Psoas muscle (tissue), 8 donors: ENCODE measurements at regions of chr18 and their contacts with region 1.

Region 1: GRCh38 chr18:26813043-26813442 is 52.5 kb downstream of the AQP4 start:
- DNase-seq: no peak
- ATAC-seq: peak in 3 of 4 donors; percentile 66 to 88 (median 73)
- H3K4me3 ChIP-seq: no peak overlapping the region
- H3K27ac ChIP-seq: no peak overlapping the region
- H3K4me1 ChIP-seq: no peaks in the 10 kb centered on the region
- H3K27me3 ChIP-seq: no peaks in the 10 kb centered on the region
- CTCF ChIP-seq: peak; percentile 73

Region 2: DNA sequence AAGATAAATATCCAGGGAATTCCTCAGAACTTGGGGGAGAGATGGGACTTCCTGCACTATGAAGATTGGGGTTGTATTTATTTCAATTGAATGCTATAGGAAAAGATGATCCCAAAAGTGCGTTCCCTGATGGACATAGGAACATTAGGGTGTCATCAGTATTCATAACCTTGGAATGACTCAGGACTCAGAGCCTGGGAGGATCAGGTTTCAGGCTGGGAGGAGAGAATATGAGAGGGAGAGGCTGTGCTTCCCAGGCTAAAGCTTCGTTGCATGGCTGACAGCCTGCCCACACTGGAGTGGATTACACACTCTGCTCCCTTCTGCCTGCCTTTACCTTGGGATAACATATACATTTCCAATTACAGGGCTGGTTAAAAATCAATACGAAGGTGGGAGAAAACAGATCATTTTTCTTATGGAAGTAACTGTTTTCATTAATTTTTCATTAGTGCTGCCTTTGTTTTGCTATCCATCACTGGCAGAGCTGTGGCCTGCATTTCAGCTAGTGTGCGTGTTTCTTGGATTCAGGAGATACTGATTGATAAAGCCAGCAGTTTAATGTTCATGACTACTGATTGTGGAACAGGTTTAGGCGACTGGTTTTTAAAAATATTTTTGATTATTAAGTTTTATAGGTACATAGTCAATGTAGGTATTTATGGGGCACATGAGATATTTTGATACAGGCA is 383.4 kb before region 1 on chr18:
- intact Hi-C with region 1: no loop called
- DNase-seq: no peak
- ATAC-seq: peak; percentile 54 to 84 (median 70)
- H3K4me3 ChIP-seq: no peak overlapping the region
- H3K27ac ChIP-seq: no peak overlapping the region
- H3K4me1 ChIP-seq: peaks cover 3% of the 10 kb centered on the region
- H3K27me3 ChIP-seq: no peaks in the 10 kb centered on the region
- CTCF ChIP-seq: no peak

Region 3: GRCh38 chr18:26963292-26963691 is 150.2 kb after region 1 on chr18:
- intact Hi-C with region 1: loop called (anchors 1 to 5 kb)
- DNase-seq: no peak
- ATAC-seq: peak in 3 of 4 donors; percentile 50 to 75 (median 57)
- H3K4me3 ChIP-seq: no peak overlapping the region
- H3K27ac ChIP-seq: no peak overlapping the region
- H3K4me1 ChIP-seq: peaks cover 12% of the 10 kb centered on the region
- H3K27me3 ChIP-seq: no peaks in the 10 kb centered on the region
- CTCF ChIP-seq: peak; percentile 24

Region 4: GRCh38 chr18:27005589-27005988 is 192.5 kb after region 1 on chr18:
- intact Hi-C with region 1: loop called (anchors 2 kb)
- DNase-seq: no peak
- ATAC-seq: no peak
- H3K4me3 ChIP-seq: no peak overlapping the region
- H3K27ac ChIP-seq: no peak overlapping the region
- H3K4me1 ChIP-seq: no peaks in the 10 kb centered on the region
- H3K27me3 ChIP-seq: no peaks in the 10 kb centered on the region
- CTCF ChIP-seq: peak; percentile 23